Breast epithelium (tissue), 4 donors: ENCODE measurements at regions of chrX and their contacts with region 1.

Region 1: DNA sequence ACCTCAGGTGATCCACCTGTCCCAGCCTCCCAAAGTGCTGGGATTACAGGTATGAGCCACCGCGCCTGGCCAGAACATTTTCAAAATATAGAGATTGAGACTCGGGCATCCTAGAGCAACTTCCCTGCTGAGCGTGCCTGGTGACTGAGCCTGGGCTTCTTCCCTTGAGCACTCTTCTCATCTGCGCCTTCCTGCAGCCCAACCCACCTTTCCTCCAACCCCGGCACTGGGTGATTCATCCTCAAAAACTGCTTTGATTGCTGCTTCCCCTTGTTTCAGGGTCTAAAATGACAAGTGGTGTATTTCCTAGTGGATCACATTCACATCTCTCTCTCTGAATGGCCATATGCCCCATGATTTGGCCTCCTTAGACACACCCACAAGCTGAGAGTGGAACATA is 37.8 kb downstream of the PHKA2 start:
- DNase-seq: no peak
- H3K4me3 ChIP-seq: no peak overlapping the region
- H3K27ac ChIP-seq: no peak overlapping the region
- H3K4me1 ChIP-seq: no peaks in the 10 kb centered on the region
- H3K27me3 ChIP-seq: peaks cover 0 to 9% of the 10 kb centered on the region in 2 donors
- CTCF ChIP-seq: no peak
- POLR2A ChIP-seq: no peak

Region 2: GRCh38 chrX:17859609-17860178 is 1086.5 kb before region 1 on chrX:
- intact Hi-C with region 1: loop called (anchors 5 kb)
- DNase-seq: peak; percentile 23 to 54
- H3K4me3 ChIP-seq: peak overlapping the region; percentile 66 to 80 (median 67)
- H3K27ac ChIP-seq: peak overlapping the region; percentile 65 to 81
- H3K4me1 ChIP-seq: no peaks in the 10 kb centered on the region
- H3K27me3 ChIP-seq: peaks cover 0 to 12% of the 10 kb centered on the region in 2 donors
- CTCF ChIP-seq: no peak
- POLR2A ChIP-seq: no peak

Region 3: DNA sequence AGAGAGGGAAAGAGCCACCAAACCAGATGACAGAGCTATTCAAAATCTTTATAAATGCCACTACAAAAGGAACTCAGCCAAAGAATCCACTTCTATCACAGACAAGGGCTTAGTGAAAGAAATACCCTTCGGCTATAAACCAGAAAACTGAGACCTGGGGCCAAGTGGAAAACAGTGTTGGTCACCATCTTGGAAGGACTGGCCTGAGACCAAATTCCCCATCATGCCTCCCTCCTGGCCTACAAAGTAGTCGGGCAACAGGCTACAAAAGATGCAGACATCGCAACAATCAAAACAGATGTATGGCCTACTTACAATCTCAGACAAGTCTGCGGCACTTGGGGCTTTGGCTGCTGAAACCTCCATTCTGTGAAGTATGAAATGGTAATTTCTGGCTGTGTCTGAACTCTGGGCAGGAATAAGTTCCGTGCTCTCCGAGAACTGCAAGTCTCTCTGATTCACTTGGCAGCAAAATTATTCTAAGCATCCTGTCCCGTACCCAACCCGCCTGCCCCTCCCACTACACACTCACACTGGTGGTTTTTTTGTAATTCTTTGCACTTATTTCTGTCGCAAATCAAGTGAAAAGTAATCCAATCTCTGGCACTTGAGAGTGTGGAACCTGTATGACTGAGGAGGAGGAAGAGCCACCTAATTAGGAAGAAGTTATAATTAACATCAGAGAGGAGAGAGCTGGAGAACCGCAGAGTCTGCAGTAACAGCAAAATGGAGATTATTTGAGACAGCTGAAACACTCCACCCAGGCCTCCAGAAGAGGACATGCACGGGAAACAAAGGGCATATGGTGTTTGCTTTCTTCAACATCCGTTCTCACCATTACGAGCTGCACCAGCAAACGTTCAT is 853.4 kb after region 1 on chrX:
- intact Hi-C with region 1: no loop called
- DNase-seq: no peak
- H3K4me3 ChIP-seq: no peak overlapping the region
- H3K27ac ChIP-seq: peak overlapping the region in 1 of 2 donors; percentile 22
- H3K4me1 ChIP-seq: peaks cover 0 to 4% of the 10 kb centered on the region in 2 donors
- H3K27me3 ChIP-seq: peaks cover 0 to 21% of the 10 kb centered on the region in 2 donors
- CTCF ChIP-seq: no peak
- POLR2A ChIP-seq: no peak